ENCODE measurements at regions of chr1 and their contacts with region 1.

Region 1: DNA sequence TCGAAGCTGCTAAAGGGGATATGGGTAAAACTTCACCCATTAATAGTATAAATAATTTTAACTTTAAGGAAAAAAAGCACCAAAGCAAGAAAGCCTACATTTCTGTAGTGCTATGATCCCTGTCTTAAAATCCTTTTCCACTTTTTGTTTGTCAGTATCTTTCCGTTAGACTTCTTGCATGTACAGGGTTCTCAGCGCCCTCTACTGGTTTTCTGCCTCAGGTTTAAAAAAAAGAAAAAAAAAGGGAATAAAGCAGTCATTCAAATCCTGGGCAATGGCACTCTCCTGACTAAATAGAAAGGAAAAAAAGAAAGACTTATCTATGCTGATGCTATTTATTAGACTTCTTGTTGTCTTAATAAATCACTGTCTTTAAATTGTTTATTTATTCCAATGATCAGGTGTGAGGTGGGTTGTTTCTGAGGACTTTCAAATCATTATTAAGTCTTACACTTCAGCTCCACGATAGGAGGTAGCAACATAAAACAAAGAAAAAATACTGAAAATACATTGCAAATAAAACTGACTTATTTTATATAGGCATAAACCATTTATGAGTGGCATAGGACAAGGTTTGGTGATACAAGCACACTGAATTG is 475.4 kb upstream of the NR5A2 start:
- DNase-seq: peak; percentile 73
- ATAC-seq: no peak
- H3K4me3 ChIP-seq: no peak overlapping the region
- H3K4me3 Mint-ChIP-seq: no peak overlapping the region
- H3K27ac ChIP-seq: no peak overlapping the region
- H3K27ac Mint-ChIP-seq: no peak overlapping the region
- H3K4me1 ChIP-seq: peaks cover 0 to 5% of the 10 kb centered on the region in 2 donors
- H3K4me1 Mint-ChIP-seq: peaks cover 3% of the 10 kb centered on the region
- H3K27me3 ChIP-seq: peaks cover 0 to 3% (median 0%) of the 10 kb centered on the region in 4 experiments
- H3K27me3 Mint-ChIP-seq: peaks cover 5% of the 10 kb centered on the region
- CTCF ChIP-seq: peak; percentile 91

Region 2: GRCh38 chr1:198756470-198756869 is 795.6 kb before region 1 on chr1:
- CTCF ChIA-PET with region 1: interaction called, 3 read pairs
- POLR2A ChIA-PET with region 1: no interaction called
- intact Hi-C with region 1: loop called (anchors 5 kb)
- DNase-seq: no peak
- ATAC-seq: no peak
- H3K4me3 ChIP-seq: no peak overlapping the region
- H3K4me3 Mint-ChIP-seq: no peak overlapping the region
- H3K27ac ChIP-seq: no peak overlapping the region
- H3K27ac Mint-ChIP-seq: no peak overlapping the region
- H3K4me1 ChIP-seq: peaks cover 0 to 10% of the 10 kb centered on the region in 2 donors
- H3K4me1 Mint-ChIP-seq: peaks cover 28% of the 10 kb centered on the region
- H3K27me3 ChIP-seq: no peaks in the 10 kb centered on the region
- H3K27me3 Mint-ChIP-seq: no peaks in the 10 kb centered on the region
- CTCF ChIP-seq: peak; percentile 44

Region 3: DNA sequence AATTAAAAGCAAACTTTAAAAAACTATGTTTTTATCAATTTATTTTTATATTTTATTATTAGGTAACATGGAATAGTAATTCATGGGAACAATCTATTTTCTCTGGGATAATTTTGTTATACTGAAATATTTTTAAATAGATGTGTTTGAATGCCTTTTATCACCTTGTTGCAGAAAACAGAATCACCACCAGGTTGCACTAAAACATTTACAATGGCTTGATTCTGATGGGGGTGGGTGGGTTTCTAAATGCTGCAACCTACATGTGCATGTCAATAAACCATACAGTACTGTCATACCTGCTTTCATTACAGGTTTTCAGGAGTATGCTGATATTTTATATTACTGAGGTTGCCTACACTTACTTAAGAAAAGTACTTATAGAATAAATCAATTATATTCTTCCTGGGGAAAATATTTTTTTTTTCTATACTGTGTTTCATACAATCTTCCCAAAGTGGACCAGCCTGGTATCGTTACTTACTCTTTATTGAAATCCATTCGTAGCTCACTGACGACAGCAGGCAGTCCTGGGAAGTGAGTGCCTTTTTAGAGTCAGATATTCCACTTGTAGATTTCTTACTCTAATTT is 780.4 kb before region 1 on chr1:
- CTCF ChIA-PET with region 1: interaction called, 3 read pairs
- POLR2A ChIA-PET with region 1: no interaction called
- intact Hi-C with region 1: loop called (anchors 1 kb)
- DNase-seq: peak; percentile 50
- ATAC-seq: no peak
- H3K4me3 ChIP-seq: no peak overlapping the region
- H3K4me3 Mint-ChIP-seq: no peak overlapping the region
- H3K27ac ChIP-seq: no peak overlapping the region
- H3K27ac Mint-ChIP-seq: no peak overlapping the region
- H3K4me1 ChIP-seq: no peaks in the 10 kb centered on the region
- H3K4me1 Mint-ChIP-seq: no peaks in the 10 kb centered on the region
- H3K27me3 ChIP-seq: no peaks in the 10 kb centered on the region
- H3K27me3 Mint-ChIP-seq: no peaks in the 10 kb centered on the region
- CTCF ChIP-seq: peak; percentile 71

Region 4: DNA sequence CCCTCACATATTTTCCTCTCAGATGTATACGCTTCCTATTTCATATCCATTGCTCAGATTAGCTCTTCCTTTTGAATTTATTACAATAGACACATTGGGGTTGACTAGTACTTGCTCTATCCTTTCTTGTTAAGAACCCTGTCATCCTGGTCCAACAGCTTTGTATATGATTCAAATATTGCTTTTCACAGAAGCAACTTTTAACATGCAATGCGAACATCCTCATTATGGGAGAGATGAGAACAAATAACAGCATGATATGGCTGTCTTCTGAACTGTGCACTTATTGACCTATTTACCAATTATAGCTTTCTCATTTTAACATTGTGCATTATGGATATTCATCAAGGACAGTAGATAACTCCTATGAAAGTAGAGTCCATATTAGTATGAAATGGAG is 402.5 kb before region 1 on chr1:
- CTCF ChIA-PET with region 1: no interaction called
- POLR2A ChIA-PET with region 1: no interaction called
- intact Hi-C with region 1: loop called (anchors 10 kb)
- DNase-seq: no peak
- ATAC-seq: no peak
- H3K4me3 ChIP-seq: no peak overlapping the region
- H3K4me3 Mint-ChIP-seq: no peak overlapping the region
- H3K27ac ChIP-seq: no peak overlapping the region
- H3K27ac Mint-ChIP-seq: no peak overlapping the region
- H3K4me1 ChIP-seq: peaks cover 8 to 19% of the 10 kb centered on the region in 2 donors
- H3K4me1 Mint-ChIP-seq: peaks cover 17% of the 10 kb centered on the region
- H3K27me3 ChIP-seq: peaks cover 0 to 81% (median 28%) of the 10 kb centered on the region in 4 experiments
- H3K27me3 Mint-ChIP-seq: peaks cover 71% of the 10 kb centered on the region
- CTCF ChIP-seq: no peak

Region 5: GRCh38 chr1:199313434-199313833 is 238.6 kb before region 1 on chr1:
- CTCF ChIA-PET with region 1: no interaction called
- POLR2A ChIA-PET with region 1: no interaction called
- intact Hi-C with region 1: loop called (anchors 10 kb)
- DNase-seq: no peak
- ATAC-seq: no peak
- H3K4me3 ChIP-seq: no peak overlapping the region
- H3K4me3 Mint-ChIP-seq: no peak overlapping the region
- H3K27ac ChIP-seq: no peak overlapping the region
- H3K27ac Mint-ChIP-seq: no peak overlapping the region
- H3K4me1 ChIP-seq: peaks cover 19 to 34% of the 10 kb centered on the region in 2 donors
- H3K4me1 Mint-ChIP-seq: peaks cover 31% of the 10 kb centered on the region
- H3K27me3 ChIP-seq: no peaks in the 10 kb centered on the region
- H3K27me3 Mint-ChIP-seq: no peaks in the 10 kb centered on the region
- CTCF ChIP-seq: no peak

Region 6: GRCh38 chr1:199336745-199337640 is 215.1 kb before region 1 on chr1:
- CTCF ChIA-PET with region 1: no interaction called
- POLR2A ChIA-PET with region 1: no interaction called
- intact Hi-C with region 1: loop called (anchors 5 kb)
- DNase-seq: peak; percentile 18
- ATAC-seq: no peak
- H3K4me3 ChIP-seq: no peak overlapping the region
- H3K4me3 Mint-ChIP-seq: no peak overlapping the region
- H3K27ac ChIP-seq: no peak overlapping the region
- H3K27ac Mint-ChIP-seq: no peak overlapping the region
- H3K4me1 ChIP-seq: no peaks in the 10 kb centered on the region
- H3K4me1 Mint-ChIP-seq: no peaks in the 10 kb centered on the region
- H3K27me3 ChIP-seq: no peaks in the 10 kb centered on the region
- H3K27me3 Mint-ChIP-seq: peaks cover 5% of the 10 kb centered on the region
- CTCF ChIP-seq: no peak

Measured in B cell (primary cell).